Activated B cell treated with CpG ODN at 0.5 μM for 24 hours (primary cell): ENCODE measurements at regions of chr10 and their contacts with region 1.

Region 1: DNA sequence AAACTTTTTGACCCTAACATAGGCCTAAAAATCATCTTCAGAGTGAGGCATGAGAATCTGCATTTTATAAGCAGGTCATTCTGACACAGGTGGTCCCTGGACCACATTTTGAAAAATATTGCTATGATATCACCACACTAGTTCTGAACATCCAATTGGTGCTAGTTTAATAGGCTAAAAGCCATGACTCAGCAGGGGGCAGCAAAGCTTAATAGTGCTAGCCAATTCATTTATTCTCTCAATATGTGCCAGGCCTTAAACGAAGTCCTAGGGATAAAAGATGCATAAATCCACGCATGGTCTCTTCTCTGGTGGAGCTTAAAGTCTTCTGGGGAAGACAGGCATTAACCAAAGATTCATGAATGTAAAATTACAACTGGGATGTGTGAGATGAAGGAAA is 10.2 kb upstream of the SLC25A28 start:
- DNase-seq: no peak
- ATAC-seq: no peak
- H3K4me3 Mint-ChIP-seq: no peak overlapping the region
- H3K27ac Mint-ChIP-seq: no peak overlapping the region
- H3K4me1 Mint-ChIP-seq: no peaks in the 10 kb centered on the region
- H3K27me3 Mint-ChIP-seq: peaks cover 25% of the 10 kb centered on the region
- CTCF ChIP-seq: no peak

Region 2: GRCh38 chr10:98980353-98980752 is 650.1 kb before region 1 on chr10:
- CTCF ChIA-PET with region 1: no interaction called
- POLR2A ChIA-PET with region 1: no interaction called
- intact Hi-C with region 1: no loop called
- DNase-seq: no peak
- ATAC-seq: no peak
- H3K4me3 Mint-ChIP-seq: no peak overlapping the region
- H3K27ac Mint-ChIP-seq: no peak overlapping the region
- H3K4me1 Mint-ChIP-seq: no peaks in the 10 kb centered on the region
- H3K27me3 Mint-ChIP-seq: no peaks in the 10 kb centered on the region
- CTCF ChIP-seq: no peak

Region 3: GRCh38 chr10:100025576-100025975 is 395.1 kb after region 1 on chr10:
- CTCF ChIA-PET with region 1: no interaction called
- POLR2A ChIA-PET with region 1: interaction called, 11 read pairs
- intact Hi-C with region 1: no loop called
- DNase-seq: no peak
- ATAC-seq: no peak
- H3K4me3 Mint-ChIP-seq: no peak overlapping the region
- H3K27ac Mint-ChIP-seq: no peak overlapping the region
- H3K4me1 Mint-ChIP-seq: peaks cover 11% of the 10 kb centered on the region
- H3K27me3 Mint-ChIP-seq: no peaks in the 10 kb centered on the region
- CTCF ChIP-seq: no peak

Region 4: DNA sequence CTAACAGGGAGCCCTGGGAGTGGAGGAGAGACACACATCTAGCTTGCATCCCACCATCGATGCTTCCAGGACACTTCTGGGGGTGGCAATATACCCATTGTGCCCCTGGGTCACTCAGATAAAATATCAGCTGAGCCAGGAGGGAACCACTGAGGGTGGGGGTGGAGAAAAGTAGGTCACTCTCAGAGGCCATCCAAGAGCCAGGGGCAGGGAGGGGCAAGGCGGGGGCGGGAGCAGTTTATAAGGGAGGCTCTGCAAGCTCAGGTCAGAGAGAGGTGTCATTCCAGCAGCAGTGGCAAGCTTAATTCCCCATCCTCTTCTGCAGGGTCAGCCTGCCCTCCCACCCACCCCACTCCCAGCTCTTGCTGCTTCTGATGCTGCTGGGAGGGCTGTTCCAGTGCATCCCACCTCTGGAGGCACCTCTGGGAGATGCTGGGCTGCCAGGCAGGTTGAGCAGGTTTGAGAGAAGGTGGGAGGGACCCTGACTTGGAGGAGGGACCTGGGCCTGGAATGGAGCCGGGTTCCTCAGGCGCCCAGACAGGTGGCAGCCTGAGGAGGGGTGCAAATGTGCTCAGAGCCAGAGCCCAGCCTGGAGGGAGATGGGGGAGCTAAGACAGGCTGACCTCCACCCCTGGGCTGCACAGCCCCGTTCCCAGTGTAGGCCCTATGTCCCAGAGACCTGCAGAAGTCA is 1480.6 kb after region 1 on chr10:
- CTCF ChIA-PET with region 1: no interaction called
- POLR2A ChIA-PET with region 1: no interaction called
- intact Hi-C with region 1: no loop called
- DNase-seq: no peak
- ATAC-seq: no peak
- H3K4me3 Mint-ChIP-seq: no peak overlapping the region
- H3K27ac Mint-ChIP-seq: no peak overlapping the region
- H3K4me1 Mint-ChIP-seq: no peaks in the 10 kb centered on the region
- H3K27me3 Mint-ChIP-seq: peaks cover 40% of the 10 kb centered on the region
- CTCF ChIP-seq: no peak